ENCODE measurements at regions of chr10 and their contacts with region 1.

Region 1: GRCh38 chr10:21495752-21496342 is 29.6 kb downstream of the SKIDA1 start:
- DNase-seq: peak; percentile 84 to 94 (median 88)
- H3K4me3 ChIP-seq: peak overlapping the region; percentile 41 to 87 (median 62)
- H3K27ac ChIP-seq: peak overlapping the region in 4 of 5 donors; percentile 32 to 80 (median 74)
- H3K4me1 ChIP-seq: peaks cover 4 to 6% of the 10 kb centered on the region in 2 donors
- H3K27me3 ChIP-seq: no peaks in the 10 kb centered on the region
- CTCF ChIP-seq: peak; percentile 71 to 99 (median 92)
- POLR2A ChIP-seq: peak in 1 of 2 donors; percentile 77

Region 2: GRCh38 chr10:21278491-21279239 is 217.2 kb before region 1 on chr10:
- intact Hi-C with region 1: loop called (anchors 2 to 5 kb)
- DNase-seq: peak; percentile 95 to 99 (median 99)
- H3K4me3 ChIP-seq: no peak overlapping the region
- H3K27ac ChIP-seq: no peak overlapping the region
- H3K4me1 ChIP-seq: peaks cover 0 to 4% of the 10 kb centered on the region in 2 donors
- H3K27me3 ChIP-seq: no peaks in the 10 kb centered on the region
- CTCF ChIP-seq: peak; percentile 87 to 93 (median 90)
- POLR2A ChIP-seq: no peak

Region 3: GRCh38 chr10:21584834-21585530 is 89.1 kb after region 1 on chr10:
- intact Hi-C with region 1: no loop called
- DNase-seq: peak in 5 of 7 donors; percentile 22 to 55 (median 38)
- H3K4me3 ChIP-seq: no peak overlapping the region
- H3K27ac ChIP-seq: no peak overlapping the region
- H3K4me1 ChIP-seq: peaks cover 5 to 32% of the 10 kb centered on the region in 2 donors
- H3K27me3 ChIP-seq: no peaks in the 10 kb centered on the region
- CTCF ChIP-seq: no peak
- POLR2A ChIP-seq: no peak

Region 4: DNA sequence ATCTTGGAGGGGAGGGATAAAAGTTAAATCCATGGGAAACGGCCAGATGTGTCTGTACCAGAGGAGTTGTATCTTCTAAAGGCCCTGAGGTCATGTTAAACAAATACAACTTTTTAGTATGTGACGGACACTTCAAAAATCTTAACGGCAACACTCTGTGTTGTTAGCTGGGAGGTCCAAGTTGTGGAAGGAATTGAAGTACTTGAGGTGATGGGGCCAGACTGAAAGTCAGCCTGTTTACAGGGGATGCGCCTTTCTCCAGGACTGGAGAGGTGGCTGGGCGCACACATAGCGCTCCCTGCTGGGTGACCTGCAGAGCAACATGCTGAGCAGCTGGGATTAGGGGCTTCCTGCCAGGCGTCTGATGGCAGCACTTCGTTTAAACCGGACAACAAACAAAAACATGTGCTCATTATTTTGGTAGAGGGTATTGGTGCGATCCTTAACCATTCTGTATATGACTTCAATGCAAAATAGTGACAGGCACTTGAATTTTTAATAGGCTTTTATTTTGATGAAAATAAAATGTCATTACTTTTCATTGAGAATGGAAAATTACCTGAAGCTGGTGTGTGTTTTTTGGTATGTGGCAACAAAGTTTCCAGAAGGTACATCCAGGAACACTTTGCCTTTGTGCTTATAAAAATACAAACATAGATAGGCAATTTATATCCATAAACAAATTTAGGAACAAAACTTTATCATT is 236.4 kb after region 1 on chr10:
- intact Hi-C with region 1: loop called in 1 of 2 experiments (anchors 5 kb)
- DNase-seq: peak; percentile 58 to 84 (median 76)
- H3K4me3 ChIP-seq: no peak overlapping the region
- H3K27ac ChIP-seq: no peak overlapping the region
- H3K4me1 ChIP-seq: peaks cover under 1 to 7% of the 10 kb centered on the region in 2 donors
- H3K27me3 ChIP-seq: no peaks in the 10 kb centered on the region
- CTCF ChIP-seq: peak; percentile 76 to 92 (median 87)
- POLR2A ChIP-seq: no peak

Region 5: DNA sequence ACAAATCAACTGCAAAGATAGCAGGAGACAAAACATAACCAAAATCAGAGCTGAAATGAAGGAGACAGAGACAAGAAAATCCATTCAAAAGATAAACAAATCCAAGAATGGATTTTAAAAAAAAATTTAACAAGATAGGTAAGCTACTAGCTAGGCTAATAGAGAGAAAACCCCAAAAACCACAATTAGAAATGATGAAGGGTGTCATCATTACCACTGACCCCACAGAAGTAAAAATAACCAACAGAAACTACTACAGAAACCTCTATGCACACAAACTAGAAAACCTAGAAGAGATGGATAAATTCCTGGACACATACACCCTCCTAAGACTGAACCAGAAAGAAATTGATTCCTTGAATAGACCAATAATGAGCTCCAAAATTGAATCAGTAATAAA is 390.1 kb after region 1 on chr10:
- intact Hi-C with region 1: no loop called
- DNase-seq: no peak
- H3K4me3 ChIP-seq: no peak overlapping the region
- H3K27ac ChIP-seq: no peak overlapping the region
- H3K4me1 ChIP-seq: no peaks in the 10 kb centered on the region
- H3K27me3 ChIP-seq: no peaks in the 10 kb centered on the region
- CTCF ChIP-seq: no peak
- POLR2A ChIP-seq: no peak

Region 6: DNA sequence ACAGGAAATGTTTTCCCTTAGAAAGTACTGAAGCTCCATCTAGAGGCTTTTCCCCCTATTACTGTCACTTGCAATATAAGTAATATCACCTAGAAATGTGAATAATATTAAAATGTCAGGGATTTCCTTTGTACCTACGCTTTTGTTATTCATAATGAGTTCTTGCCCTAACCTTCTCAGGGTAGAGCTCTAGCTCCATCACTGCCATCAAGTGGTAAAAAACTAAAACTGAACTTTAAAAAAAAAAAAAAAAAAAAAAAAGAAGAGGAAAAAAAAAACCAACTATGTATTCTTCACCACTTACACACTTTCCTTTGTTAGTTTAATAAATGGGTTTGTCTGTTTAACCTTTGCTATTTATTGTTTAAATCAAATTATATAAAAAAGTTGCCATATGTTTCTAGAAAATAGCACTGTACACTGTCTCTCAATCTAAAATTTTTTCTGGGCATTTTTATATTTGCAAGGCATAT is 457.8 kb after region 1 on chr10:
- intact Hi-C with region 1: loop called in 1 of 2 experiments (anchors 10 kb)
- DNase-seq: no peak
- H3K4me3 ChIP-seq: no peak overlapping the region
- H3K27ac ChIP-seq: no peak overlapping the region
- H3K4me1 ChIP-seq: peaks cover 0 to 19% of the 10 kb centered on the region in 2 donors
- H3K27me3 ChIP-seq: no peaks in the 10 kb centered on the region
- CTCF ChIP-seq: peak; percentile 15 to 53 (median 38)
- POLR2A ChIP-seq: no peak